ENCODE measurements at regions of chr4 and their contacts with region 1.

Region 1: GRCh38 chr4:113602646-113603228 is 158.8 kb downstream of the CAMK2D start:
- DNase-seq: no peak
- ATAC-seq: no peak
- H3K4me3 ChIP-seq: no peak overlapping the region
- H3K27ac ChIP-seq: peak overlapping the region; percentile 3
- H3K4me1 ChIP-seq: peaks cover 21% of the 10 kb centered on the region
- H3K27me3 ChIP-seq: no peaks in the 10 kb centered on the region
- CTCF ChIP-seq: no peak

Region 2: DNA sequence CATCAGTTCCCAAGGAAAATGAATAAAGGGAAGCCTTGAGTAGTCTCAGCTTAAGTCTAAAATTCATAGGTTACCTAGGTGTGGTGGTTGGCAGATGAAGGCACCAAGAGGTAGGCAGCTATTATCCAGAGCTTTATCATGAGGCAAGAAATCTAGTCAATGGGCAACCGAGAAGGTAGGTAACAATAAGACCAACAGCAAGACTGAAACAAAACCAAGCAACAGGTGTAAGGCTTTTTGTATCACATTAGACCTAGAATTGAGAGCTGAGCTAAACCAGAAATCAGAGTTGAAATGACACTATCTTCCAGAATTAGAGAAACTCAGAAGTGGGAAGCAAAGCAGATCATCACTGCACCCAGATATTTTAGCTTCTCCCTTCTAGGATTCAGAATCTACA is 41.7 kb after region 1 on chr4:
- intact Hi-C with region 1: loop called in 1 of 2 experiments (anchors 1 kb)
- DNase-seq: no peak
- ATAC-seq: no peak
- H3K4me3 ChIP-seq: no peak overlapping the region
- H3K27ac ChIP-seq: no peak overlapping the region
- H3K4me1 ChIP-seq: peaks cover 25% of the 10 kb centered on the region
- H3K27me3 ChIP-seq: no peaks in the 10 kb centered on the region
- CTCF ChIP-seq: no peak